ENCODE measurements at regions of chr16 and their contacts with region 1.

Region 1: DNA sequence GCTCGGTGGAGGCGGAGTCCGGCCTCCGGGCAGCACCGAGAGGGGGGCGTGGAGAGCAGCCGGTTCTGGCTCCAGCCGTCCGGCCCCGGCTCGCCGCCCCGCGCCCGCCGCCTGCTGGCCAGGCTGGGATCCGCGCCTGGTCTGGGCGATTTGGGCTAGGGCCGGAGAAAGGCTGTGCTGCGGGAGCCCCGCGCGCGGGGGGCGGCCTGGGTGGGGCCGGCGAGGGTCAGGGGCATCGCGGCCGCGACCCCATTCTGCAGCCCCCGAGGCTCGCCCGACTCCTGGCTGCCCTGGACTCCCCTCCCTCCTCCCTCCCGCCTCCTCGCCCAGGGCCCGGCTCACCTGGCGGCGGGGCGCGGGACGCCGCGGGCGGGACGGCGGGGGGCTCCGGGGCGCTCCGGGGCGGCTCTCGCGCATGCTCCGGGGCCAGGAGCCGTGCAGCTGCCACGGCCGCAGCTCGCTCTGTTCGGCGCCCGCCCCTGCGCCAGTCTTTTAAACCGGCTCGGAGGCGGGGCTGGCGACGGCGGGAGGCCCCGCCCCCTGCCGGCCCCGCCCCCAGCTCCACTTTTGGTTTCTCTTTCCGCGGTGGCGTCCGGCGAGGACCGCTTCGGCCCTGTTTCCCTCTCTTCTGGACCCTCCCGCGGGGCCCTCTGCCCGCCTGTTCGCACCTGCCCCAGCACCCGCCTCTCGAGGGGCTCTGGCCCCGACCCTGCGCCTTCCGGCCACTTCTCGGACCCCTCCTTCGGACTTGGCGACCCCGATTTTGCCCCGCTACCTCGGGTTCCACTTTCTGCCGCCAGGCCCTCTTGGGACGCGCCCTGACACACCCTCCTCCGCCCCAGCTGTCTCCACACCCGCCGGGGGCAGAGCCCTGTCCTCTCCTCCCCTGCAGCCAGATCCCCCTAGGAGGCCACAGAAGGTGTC is at the start of gene SOCS1:
- DNase-seq: peak; percentile 84
- ATAC-seq: peak; percentile 76
- H3K4me3 ChIP-seq: peak within 1 kb of the TSS; percentile 87
- H3K27ac ChIP-seq: peak within 1 kb of the TSS; percentile 97
- H3K4me1 ChIP-seq: peaks cover 21% of the 10 kb centered on the region
- H3K27me3 ChIP-seq: no peaks in the 10 kb centered on the region
- CTCF ChIP-seq: peak; percentile 82
- POLR2A ChIP-seq: peak; percentile 99
- RAD21 ChIP-seq: peak; percentile 85
- total RNA-seq, gene SOCS1: 2.0 and 2.2 TPM in 2 replicates

Region 2: DNA sequence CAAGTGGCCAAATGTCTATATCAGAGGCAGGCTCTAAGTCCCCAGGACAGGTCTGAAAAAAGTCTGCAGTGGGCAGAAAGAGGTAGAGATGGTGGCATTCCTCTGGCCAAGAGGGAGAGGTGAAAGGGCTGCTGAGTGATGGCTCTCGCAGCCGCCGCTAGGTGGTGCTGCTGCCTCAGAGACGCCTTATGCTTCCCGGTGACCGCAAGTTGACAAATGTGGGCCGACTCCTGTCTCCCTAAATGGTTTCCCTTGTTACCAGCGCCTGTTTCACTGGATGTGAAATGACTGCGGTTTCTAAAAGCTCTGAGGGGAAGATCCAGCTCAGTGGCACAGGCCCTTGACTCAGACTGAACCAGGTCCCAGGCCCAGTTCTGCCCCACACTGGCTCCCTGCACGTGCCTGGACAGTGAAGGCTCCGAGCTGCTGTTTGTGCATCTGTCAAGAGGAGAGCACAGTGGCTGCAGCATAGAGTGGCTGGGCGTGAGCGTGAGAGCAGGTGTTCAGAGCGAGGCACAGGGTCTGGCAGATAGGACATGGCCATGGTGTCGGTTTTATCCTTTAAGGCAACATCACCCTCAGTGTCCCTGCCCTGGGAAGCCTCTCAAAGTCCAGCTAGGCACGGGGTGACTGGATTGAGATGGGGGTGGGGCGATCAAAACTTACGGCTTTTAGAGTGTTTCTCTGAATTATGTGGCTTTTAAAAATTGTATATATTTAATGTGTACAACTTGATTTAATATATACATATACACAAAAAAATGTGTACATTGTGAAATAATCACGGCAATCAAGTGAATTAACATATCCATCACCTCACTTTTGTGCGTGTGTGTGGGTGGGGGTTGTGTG is 291.7 kb before region 1 on chr16:
- CTCF ChIA-PET with region 1: interaction called, 12 read pairs
- POLR2A ChIA-PET with region 1: interaction called, 9 read pairs
- dilution Hi-C with region 1: no loop called
- in situ Hi-C with region 1: loop called (anchors 5 kb)
- intact Hi-C with region 1: loop called (anchors 1 kb)
- DNase-seq: peak; percentile 86
- ATAC-seq: peak; percentile 85
- H3K4me3 ChIP-seq: no peak overlapping the region
- H3K27ac ChIP-seq: peak overlapping the region; percentile 8; the same call in 1 of the 2 replicates
- H3K4me1 ChIP-seq: peaks cover 20% of the 10 kb centered on the region
- H3K27me3 ChIP-seq: no peaks in the 10 kb centered on the region
- CTCF ChIP-seq: peak; percentile 98
- POLR2A ChIP-seq: peak; percentile 35; the same call in 1 of the 2 replicates
- RAD21 ChIP-seq: peak; percentile 98

Region 3: GRCh38 chr16:10981697-10982216 is 274.2 kb before region 1 on chr16:
- CTCF ChIA-PET with region 1: interaction called, 14 read pairs
- POLR2A ChIA-PET with region 1: interaction called, 9 read pairs
- dilution Hi-C with region 1: no loop called
- in situ Hi-C with region 1: no loop called
- intact Hi-C with region 1: no loop called
- DNase-seq: no peak
- ATAC-seq: no peak; the same call in 1 of the 2 replicates
- H3K4me3 ChIP-seq: no peak overlapping the region
- H3K27ac ChIP-seq: no peak overlapping the region
- H3K4me1 ChIP-seq: peaks cover 17% of the 10 kb centered on the region
- H3K27me3 ChIP-seq: no peaks in the 10 kb centered on the region
- CTCF ChIP-seq: peak; percentile 24; the same call in 1 of the 2 replicates
- POLR2A ChIP-seq: no peak
- RAD21 ChIP-seq: no peak; the same call in 1 of the 2 replicates

Region 4: DNA sequence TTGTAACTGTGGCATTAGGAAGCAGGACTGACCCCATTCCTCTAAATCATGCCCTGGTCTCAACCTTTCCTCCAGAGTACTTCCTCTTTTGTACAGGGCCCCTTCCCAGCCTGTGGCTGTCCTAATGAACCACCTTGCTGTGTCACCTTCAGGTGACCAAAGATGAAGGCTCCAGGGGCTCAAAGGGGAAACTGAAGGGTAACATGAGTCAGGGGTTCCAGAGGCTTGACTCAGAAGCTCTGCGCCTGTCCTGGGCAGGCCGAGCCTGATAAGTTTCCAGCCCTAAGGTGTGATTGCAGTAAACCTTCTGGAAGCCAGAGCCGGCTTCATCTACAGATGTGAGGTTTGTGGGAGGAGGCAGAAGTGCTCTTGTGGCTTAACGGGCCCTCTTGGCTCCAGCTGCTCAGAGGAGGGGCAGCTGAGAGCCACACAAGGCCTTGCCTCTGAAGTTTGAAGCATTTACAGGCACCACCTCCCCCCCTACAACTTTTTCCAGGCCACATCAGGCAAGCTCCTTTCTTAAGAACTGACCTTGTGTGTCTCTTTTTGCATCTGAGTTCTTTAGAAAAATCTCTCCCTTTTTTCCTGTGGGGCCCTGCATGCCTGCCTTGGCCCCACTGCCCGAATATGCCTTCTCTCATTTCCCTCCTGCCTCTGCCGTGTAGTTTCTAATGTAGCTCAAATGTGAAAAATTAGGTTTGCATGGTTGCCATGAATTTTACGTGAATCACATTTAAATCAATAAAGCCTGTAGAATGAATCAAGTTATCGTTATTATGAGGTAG is 161.7 kb before region 1 on chr16:
- CTCF ChIA-PET with region 1: no interaction called
- POLR2A ChIA-PET with region 1: interaction called, 5 read pairs
- dilution Hi-C with region 1: no loop called
- in situ Hi-C with region 1: no loop called
- intact Hi-C with region 1: loop called (anchors 5 kb)
- DNase-seq: peak; percentile 86
- ATAC-seq: peak; percentile 41
- H3K4me3 ChIP-seq: no peak overlapping the region
- H3K27ac ChIP-seq: peak overlapping the region; percentile 71
- H3K4me1 ChIP-seq: peaks cover 37% of the 10 kb centered on the region
- H3K27me3 ChIP-seq: no peaks in the 10 kb centered on the region
- CTCF ChIP-seq: no peak
- POLR2A ChIP-seq: no peak
- RAD21 ChIP-seq: no peak

Region 5: DNA sequence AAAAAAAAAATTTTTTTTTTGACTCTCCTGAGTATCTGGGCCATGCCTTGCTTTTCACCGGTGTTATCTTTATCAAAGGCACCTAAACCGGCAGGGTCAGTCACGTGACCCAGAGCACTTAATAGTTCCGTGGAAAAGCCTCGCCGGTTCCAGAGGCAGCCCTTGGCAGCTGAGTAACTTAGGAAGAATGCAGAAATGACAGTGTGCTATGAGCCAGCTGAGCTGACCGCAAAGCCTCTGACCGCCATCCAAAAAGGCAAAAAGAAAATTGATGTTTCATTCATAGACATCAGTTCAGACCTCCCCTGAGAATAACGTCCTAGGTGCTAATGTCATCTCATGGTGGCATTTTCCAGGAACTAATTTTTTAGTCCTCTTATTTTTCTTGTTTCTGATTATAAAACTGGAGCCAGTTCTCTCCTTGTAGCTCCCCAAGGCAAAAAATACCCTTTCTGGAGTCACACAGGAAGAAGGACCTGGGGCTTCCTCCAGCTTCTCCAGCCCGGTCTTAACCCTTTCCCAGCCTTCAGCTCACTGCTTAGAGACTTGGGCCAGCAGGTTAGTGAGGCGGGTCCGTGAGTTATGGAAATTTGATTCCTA is 122.6 kb before region 1 on chr16:
- CTCF ChIA-PET with region 1: no interaction called
- POLR2A ChIA-PET with region 1: interaction called, 3 read pairs
- dilution Hi-C with region 1: no loop called
- in situ Hi-C with region 1: no loop called
- intact Hi-C with region 1: loop called (anchors 10 kb)
- DNase-seq: peak; percentile 96
- ATAC-seq: peak; percentile 86
- H3K4me3 ChIP-seq: no peak overlapping the region
- H3K27ac ChIP-seq: peak overlapping the region; percentile 74
- H3K4me1 ChIP-seq: peaks cover 45% of the 10 kb centered on the region
- H3K27me3 ChIP-seq: no peaks in the 10 kb centered on the region
- CTCF ChIP-seq: no peak
- POLR2A ChIP-seq: no peak
- RAD21 ChIP-seq: peak; percentile 29

Region 6: GRCh38 chr16:11356573-11357331 is 100.8 kb after region 1 on chr16:
- CTCF ChIA-PET with region 1: interaction called, 7 read pairs
- POLR2A ChIA-PET with region 1: no interaction called
- dilution Hi-C with region 1: no loop called
- in situ Hi-C with region 1: loop called (anchors 5 kb)
- intact Hi-C with region 1: loop called (anchors 1 kb)
- DNase-seq: peak; percentile 61
- ATAC-seq: peak; percentile 67
- H3K4me3 ChIP-seq: no peak overlapping the region
- H3K27ac ChIP-seq: peak overlapping the region; percentile 44; the same call in 1 of the 2 replicates
- H3K4me1 ChIP-seq: peaks cover 45% of the 10 kb centered on the region
- H3K27me3 ChIP-seq: no peaks in the 10 kb centered on the region
- CTCF ChIP-seq: peak; percentile 77
- POLR2A ChIP-seq: no peak
- RAD21 ChIP-seq: peak; percentile 80

Region 7: GRCh38 chr16:11506741-11507305 is 250.8 kb after region 1 on chr16:
- CTCF ChIA-PET with region 1: no interaction called
- POLR2A ChIA-PET with region 1: no interaction called
- dilution Hi-C with region 1: no loop called
- in situ Hi-C with region 1: no loop called
- intact Hi-C with region 1: no loop called
- DNase-seq: no peak
- ATAC-seq: no peak
- H3K4me3 ChIP-seq: no peak overlapping the region
- H3K27ac ChIP-seq: no peak overlapping the region
- H3K4me1 ChIP-seq: no peaks in the 10 kb centered on the region
- H3K27me3 ChIP-seq: no peaks in the 10 kb centered on the region; the same call in 1 of the 2 replicates
- CTCF ChIP-seq: no peak
- POLR2A ChIP-seq: no peak
- RAD21 ChIP-seq: no peak

Measured in IMR-90 (cell line).